ENCODE measurements at regions of chr16 and their contacts with region 1.

Region 1: GRCh38 chr16:30429678-30430427 is at the start of gene DCTPP1:
- DNase-seq: peak; percentile 97
- H3K4me3 ChIP-seq: peak within 1 kb of the TSS; percentile 46
- H3K27ac ChIP-seq: peak within 1 kb of the TSS; percentile 77
- H3K4me1 ChIP-seq: peaks cover 3% of the 10 kb centered on the region
- H3K27me3 ChIP-seq: no peaks in the 10 kb centered on the region
- CTCF ChIP-seq: peak; percentile 82
- total RNA-seq, gene DCTPP1: 80.9 to 153 TPM

Region 2: DNA sequence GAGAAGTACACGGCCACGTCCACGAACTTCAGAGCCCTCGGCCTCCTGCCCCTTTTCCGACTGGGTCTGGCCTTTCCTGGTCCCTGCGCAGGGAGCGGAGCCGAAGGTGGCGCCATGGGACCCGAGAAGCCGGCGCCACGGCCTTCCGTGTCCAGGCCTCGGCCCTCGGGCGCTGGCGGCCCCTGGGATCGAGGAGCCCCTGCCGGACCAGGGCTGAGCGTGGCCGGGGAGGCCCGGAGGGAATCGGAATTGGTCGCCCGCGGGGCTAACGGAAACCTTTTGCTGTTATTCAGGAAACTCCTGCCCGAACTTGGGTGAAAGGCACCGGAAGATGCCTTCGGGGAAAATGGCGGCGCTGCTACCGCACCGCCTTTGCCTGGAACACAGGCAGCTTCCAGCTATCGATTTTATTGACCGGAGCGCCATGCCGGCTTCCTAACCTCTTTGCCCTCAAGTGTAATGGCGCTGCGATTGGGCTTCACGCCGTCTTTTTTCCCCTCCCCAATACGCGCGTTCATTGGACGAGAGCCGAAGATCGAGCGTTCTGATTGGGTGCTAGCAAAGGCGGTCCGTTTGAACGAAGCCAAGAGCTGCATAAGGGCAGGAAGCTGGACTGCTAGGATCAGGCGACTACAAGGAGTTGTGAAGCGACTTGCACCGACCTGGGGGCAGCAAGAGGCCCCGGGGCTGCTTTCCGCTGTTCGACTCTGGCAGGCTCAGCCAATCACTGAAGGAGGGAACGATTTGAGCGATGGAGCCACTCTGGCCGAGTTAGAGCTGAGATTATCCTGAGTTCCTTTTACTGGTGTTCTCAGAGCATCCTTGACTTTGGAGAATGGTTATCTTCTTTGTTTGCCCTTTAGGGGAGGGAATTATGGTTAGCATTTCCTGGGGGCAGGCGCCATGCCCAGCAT is 180.3 kb after region 1 on chr16 and contains the start of gene ZNF689:
- intact Hi-C with region 1: loop called (anchors 10 kb)
- DNase-seq: peak; percentile 98
- H3K4me3 ChIP-seq: peak within 1 kb of the TSS; percentile 97
- H3K27ac ChIP-seq: peak within 1 kb of the TSS; percentile 97
- H3K4me1 ChIP-seq: peaks cover 6% of the 10 kb centered on the region
- H3K27me3 ChIP-seq: no peaks in the 10 kb centered on the region
- CTCF ChIP-seq: no peak
- total RNA-seq, gene ZNF689: 6.8 to 7.0 TPM

Region 3: DNA sequence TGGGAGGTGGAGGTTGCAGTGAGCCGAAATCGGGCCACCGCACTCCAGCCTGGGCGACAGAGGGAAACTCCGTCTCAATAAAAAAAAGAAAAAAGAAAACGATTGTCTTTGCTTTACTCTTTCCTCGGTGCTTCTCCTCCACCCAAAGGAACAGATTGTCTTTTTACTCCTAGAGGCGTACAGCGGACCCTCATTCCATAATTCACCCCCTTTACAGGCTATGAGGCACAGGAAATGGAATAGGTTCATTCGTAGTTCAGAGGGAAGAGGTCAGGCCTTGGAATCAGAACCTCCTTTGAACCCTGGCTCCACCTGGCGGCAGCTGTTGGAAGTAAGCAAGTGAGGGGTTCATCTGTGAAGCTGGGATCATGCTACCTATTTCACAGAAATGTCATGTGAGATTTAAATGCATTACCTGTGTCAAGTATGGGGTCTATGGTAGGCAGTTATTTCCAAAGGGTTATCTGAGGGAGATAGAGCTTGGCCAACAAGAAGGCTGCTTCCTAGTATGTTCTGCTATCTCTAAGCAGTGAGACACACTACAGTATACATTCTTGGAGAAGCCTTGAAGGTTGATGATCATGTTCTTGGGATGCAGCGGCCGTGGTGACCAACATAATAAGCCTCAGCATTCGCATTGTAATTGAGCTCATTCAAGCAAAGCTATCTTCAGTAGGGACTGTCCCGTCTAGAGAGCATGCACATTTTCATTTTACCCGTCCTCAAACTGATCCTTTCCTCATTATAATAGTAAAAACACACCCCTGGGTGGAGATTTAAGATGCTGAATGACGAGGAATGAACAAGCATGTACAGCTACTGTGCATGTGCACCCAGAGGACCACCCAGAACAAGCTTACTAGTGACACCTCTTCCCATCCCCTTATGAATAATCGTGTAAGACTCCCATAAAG is 199.0 kb after region 1 on chr16:
- intact Hi-C with region 1: loop called (anchors 10 kb)
- DNase-seq: peak; percentile 97
- H3K4me3 ChIP-seq: no peak overlapping the region
- H3K27ac ChIP-seq: no peak overlapping the region
- H3K4me1 ChIP-seq: no peaks in the 10 kb centered on the region
- H3K27me3 ChIP-seq: no peaks in the 10 kb centered on the region
- CTCF ChIP-seq: peak; percentile 87